ENCODE measurements at regions of chr5 and their contacts with region 1.

Region 1: GRCh38 chr5:1950708-1951103 is 68.0 kb upstream of the IRX4 start:
- DNase-seq: no peak

Region 2: GRCh38 chr5:1917832-1918487 is 32.7 kb before region 1 on chr5:
- intact Hi-C with region 1: loop called in 1 of 2 experiments (anchors 1 kb)
- DNase-seq: no peak

Measured in posterior vena cava (tissue), 2 donors.